Activated naive CD4-positive, alpha-beta T cell treated with anti-CD3 and anti-CD28 coated beads for 36 hours (primary cell): ENCODE measurements at regions of chr21 and their contacts with region 1.

Region 1: DNA sequence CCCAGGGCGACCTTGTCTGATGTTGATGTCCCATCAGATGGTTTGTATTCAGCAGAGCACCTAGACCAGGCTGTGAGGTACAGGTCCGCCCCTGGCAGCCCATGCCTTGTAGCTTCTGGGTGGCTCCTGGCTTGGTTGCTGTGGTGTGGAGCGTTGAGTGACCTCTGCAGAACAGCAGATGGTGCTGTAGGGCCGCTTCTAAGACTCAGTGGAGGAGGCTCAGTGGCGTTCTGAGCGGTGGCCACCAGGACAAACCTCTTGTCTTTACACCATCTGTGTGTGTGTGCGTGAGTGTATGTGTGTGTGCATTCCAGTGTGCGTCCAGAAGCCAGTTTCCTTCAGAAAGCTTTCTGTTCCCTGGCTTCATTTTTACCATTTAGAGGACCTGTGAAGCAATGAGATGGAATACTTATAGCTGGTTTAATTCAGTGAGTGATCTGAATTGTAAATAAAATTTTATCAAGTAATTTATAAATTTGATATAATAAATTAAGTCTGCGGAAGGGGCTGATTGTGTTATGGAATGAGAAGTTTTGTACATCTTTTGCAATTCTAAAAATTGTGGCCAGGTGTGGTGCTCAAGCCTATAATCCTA is 66.1 kb downstream of the ADARB1 start:
- DNase-seq: peak; percentile 78
- H3K4me3 Mint-ChIP-seq: no peak overlapping the region
- H3K27ac Mint-ChIP-seq: no peak overlapping the region
- H3K4me1 Mint-ChIP-seq: peaks cover 3% of the 10 kb centered on the region
- H3K27me3 Mint-ChIP-seq: no peaks in the 10 kb centered on the region

Region 2: GRCh38 chr21:44949779-44950198 is 190.7 kb before region 1 on chr21:
- CTCF ChIA-PET with region 1: interaction called, 82 read pairs
- intact Hi-C with region 1: loop called (anchors 1 kb)
- DNase-seq: peak; percentile 92
- H3K4me3 Mint-ChIP-seq: no peak overlapping the region
- H3K27ac Mint-ChIP-seq: no peak overlapping the region
- H3K4me1 Mint-ChIP-seq: peaks cover 17% of the 10 kb centered on the region
- H3K27me3 Mint-ChIP-seq: no peaks in the 10 kb centered on the region

Region 3: GRCh38 chr21:45056917-45057560 is 83.4 kb before region 1 on chr21:
- CTCF ChIA-PET with region 1: no interaction called
- intact Hi-C with region 1: no loop called
- DNase-seq: no peak
- H3K4me3 Mint-ChIP-seq: no peak overlapping the region
- H3K27ac Mint-ChIP-seq: no peak overlapping the region
- H3K4me1 Mint-ChIP-seq: no peaks in the 10 kb centered on the region
- H3K27me3 Mint-ChIP-seq: peaks cover 7% of the 10 kb centered on the region

Region 4: GRCh38 chr21:45074818-45075595 is 65.4 kb before region 1 on chr21:
- CTCF ChIA-PET with region 1: interaction called, 17 read pairs
- intact Hi-C with region 1: no loop called
- DNase-seq: peak; percentile 34
- H3K4me3 Mint-ChIP-seq: peak overlapping the region; percentile 84
- H3K27ac Mint-ChIP-seq: peak overlapping the region; percentile 76
- H3K4me1 Mint-ChIP-seq: peaks cover 45% of the 10 kb centered on the region
- H3K27me3 Mint-ChIP-seq: no peaks in the 10 kb centered on the region

Region 5: GRCh38 chr21:45120975-45121374 is 19.5 kb before region 1 on chr21:
- CTCF ChIA-PET with region 1: interaction called, 112 read pairs
- intact Hi-C with region 1: no loop called
- DNase-seq: no peak
- H3K4me3 Mint-ChIP-seq: no peak overlapping the region
- H3K27ac Mint-ChIP-seq: no peak overlapping the region
- H3K4me1 Mint-ChIP-seq: peaks cover 17% of the 10 kb centered on the region
- H3K27me3 Mint-ChIP-seq: no peaks in the 10 kb centered on the region

Region 6: DNA sequence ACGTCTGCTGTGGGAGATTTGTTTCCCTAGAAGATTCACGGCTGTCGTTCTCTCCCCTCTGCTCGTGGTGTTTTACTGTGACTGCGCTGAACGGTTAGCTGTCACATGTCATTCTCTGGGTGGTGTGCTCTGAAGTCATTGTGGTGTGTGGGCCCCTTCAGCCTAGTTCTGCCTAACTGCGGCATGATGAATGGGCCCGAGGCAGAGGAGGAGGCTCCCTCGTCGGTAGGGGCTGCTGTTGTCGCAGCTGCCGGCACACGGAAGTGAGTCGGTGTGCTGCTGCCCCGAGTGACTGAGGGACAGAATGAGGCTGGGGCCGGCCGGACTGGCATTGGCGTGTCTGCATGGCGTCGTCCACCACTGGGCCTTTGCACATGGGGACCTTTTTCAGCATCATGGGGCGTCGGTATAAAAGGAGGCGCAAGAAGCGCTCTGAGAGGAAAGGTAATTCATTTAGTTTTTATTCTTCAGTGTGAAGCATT is 11.9 kb after region 1 on chr21:
- CTCF ChIA-PET with region 1: interaction called, 32 read pairs
- intact Hi-C with region 1: no loop called
- DNase-seq: peak; percentile 79
- H3K4me3 Mint-ChIP-seq: peak overlapping the region; percentile 50
- H3K27ac Mint-ChIP-seq: no peak overlapping the region
- H3K4me1 Mint-ChIP-seq: peaks cover 32% of the 10 kb centered on the region
- H3K27me3 Mint-ChIP-seq: no peaks in the 10 kb centered on the region

Region 7: GRCh38 chr21:45439161-45439872 is 298.9 kb after region 1 on chr21:
- CTCF ChIA-PET with region 1: no interaction called
- intact Hi-C with region 1: loop called (anchors 1 kb)
- DNase-seq: peak; percentile 90
- H3K4me3 Mint-ChIP-seq: peak overlapping the region; percentile 50
- H3K27ac Mint-ChIP-seq: no peak overlapping the region
- H3K4me1 Mint-ChIP-seq: peaks cover 3% of the 10 kb centered on the region
- H3K27me3 Mint-ChIP-seq: no peaks in the 10 kb centered on the region